Lower lobe of right lung (tissue), 2 donors: ENCODE measurements at regions of chr20 and their contacts with region 1.

Region 1: GRCh38 chr20:47379433-47380150 is 23.1 kb upstream of the ZMYND8 start:
- DNase-seq: no peak
- ATAC-seq: no peak
- H3K4me3 ChIP-seq: no peak overlapping the region
- H3K27ac ChIP-seq: no peak overlapping the region
- H3K4me1 ChIP-seq: peaks cover 24% of the 10 kb centered on the region
- H3K27me3 ChIP-seq: no peaks in the 10 kb centered on the region
- CTCF ChIP-seq: no peak

Region 2: DNA sequence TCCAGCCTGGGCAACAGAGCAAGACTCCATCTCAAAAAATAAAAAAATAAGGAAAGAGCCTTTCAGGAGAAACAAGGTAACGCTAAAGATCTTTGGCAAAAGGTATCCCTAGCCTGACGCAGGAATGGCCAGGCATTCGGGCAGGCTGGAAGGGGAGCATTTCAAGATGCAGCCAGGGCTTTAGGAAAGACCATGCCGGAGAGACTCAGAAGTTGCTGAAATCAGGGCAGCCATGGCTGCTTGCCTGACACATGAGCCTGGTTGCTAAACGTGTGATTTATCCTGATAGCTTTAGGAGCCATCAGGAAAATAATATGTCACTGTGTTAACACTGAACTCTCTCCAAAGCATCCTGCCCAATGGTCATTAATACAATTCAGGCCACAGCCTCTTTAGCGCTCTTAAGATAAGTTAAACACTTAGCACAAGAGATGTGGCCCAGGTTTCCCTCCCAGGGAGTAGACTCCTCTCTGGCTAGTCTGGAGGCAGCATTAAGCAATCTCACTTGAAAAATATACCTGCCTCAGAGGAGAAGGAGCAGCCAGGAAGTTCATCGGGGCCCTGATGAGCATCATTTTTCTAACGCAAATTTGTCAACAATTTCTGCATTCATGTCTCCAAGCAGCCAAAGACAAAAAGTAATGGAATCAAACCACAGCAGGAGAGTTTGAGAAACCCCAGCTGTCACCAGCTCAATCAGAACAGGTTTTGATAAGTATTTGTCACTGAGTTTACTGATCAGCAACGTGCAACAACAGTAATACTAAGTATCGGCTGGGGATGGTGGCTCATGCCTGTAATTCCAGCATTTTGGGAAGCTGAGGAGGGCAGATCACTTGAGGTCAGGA is 223.1 kb before region 1 on chr20:
- intact Hi-C with region 1: no loop called
- DNase-seq: no peak
- ATAC-seq: peak; percentile 90
- H3K4me3 ChIP-seq: no peak overlapping the region
- H3K27ac ChIP-seq: no peak overlapping the region
- H3K4me1 ChIP-seq: no peaks in the 10 kb centered on the region
- H3K27me3 ChIP-seq: no peaks in the 10 kb centered on the region
- CTCF ChIP-seq: no peak

Region 3: GRCh38 chr20:47272893-47273590 is 106.5 kb before region 1 on chr20:
- intact Hi-C with region 1: loop called (anchors 5 kb)
- DNase-seq: no peak
- ATAC-seq: peak; percentile 81 to 86
- H3K4me3 ChIP-seq: no peak overlapping the region
- H3K27ac ChIP-seq: peak overlapping the region; percentile 71
- H3K4me1 ChIP-seq: peaks cover 40% of the 10 kb centered on the region
- H3K27me3 ChIP-seq: no peaks in the 10 kb centered on the region
- CTCF ChIP-seq: peak; percentile 88

Region 4: GRCh38 chr20:47578543-47578942 is 199.0 kb after region 1 on chr20:
- intact Hi-C with region 1: no loop called
- DNase-seq: no peak
- ATAC-seq: no peak
- H3K4me3 ChIP-seq: no peak overlapping the region
- H3K27ac ChIP-seq: peak overlapping the region; percentile 19
- H3K4me1 ChIP-seq: peaks cover 67% of the 10 kb centered on the region
- H3K27me3 ChIP-seq: no peaks in the 10 kb centered on the region
- CTCF ChIP-seq: no peak

Region 5: GRCh38 chr20:48012197-48013085 is 632.8 kb after region 1 on chr20:
- intact Hi-C with region 1: no loop called
- DNase-seq: no peak
- ATAC-seq: no peak
- H3K4me3 ChIP-seq: no peak overlapping the region
- H3K27ac ChIP-seq: no peak overlapping the region
- H3K4me1 ChIP-seq: no peaks in the 10 kb centered on the region
- H3K27me3 ChIP-seq: no peaks in the 10 kb centered on the region
- CTCF ChIP-seq: no peak